HEK293T (cell line): ENCODE measurements at regions of chr5 and their contacts with region 1.

Region 1: DNA sequence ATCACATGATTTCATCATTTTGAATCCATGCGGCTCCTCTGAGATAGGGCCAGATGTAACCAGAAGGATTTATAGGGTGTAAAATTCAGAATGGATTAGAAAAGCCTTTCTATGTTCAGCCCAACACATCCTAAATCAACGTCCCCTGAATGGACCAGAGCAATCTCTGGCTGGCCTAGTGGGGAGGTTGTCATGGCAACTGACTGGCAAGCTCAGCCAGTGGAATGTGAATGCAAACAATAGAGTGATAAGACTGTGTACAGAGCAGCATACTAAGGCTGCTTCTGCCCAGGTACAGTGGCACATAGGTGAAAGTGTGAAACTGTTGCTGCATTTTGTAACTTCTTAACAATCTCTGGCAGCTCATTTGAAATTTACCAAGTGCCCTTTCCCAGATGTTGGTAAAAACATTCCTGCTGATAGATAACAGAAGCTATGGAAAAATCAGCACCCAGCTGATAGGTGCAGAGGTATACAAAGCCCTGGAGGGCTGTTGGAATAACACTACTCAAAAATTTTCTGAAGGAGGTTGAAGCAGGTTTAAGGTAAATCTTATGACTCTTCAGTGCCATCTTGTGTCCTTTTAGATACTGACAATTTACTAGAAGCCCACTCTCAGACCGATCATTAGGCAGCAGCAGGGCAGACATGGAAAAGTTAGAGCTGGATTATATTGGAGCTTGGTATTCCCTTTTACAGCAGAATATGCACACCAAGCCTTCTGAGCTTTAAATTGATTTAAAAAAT is 267.2 kb downstream of the RAB3C start:
- DNase-seq: peak; percentile 47

Region 2: GRCh38 chr5:58498340-58498942 is 351.7 kb before region 1 on chr5:
- CTCF ChIA-PET with region 1: interaction called, 16 read pairs
- POLR2A ChIA-PET with region 1: no interaction called
- DNase-seq: peak; percentile 40